ENCODE measurements at regions of chr2 and their contacts with region 1.

Region 1: GRCh38 chr2:173075781-173076580 is at the start of gene MAP3K20:
- DNase-seq: peak; percentile 75 to 82
- ATAC-seq: peak; percentile 75 to 78
- H3K4me3 ChIP-seq: peak within 1 kb of the TSS; percentile 59 to 83 (median 80)
- H3K27ac ChIP-seq: peak within 1 kb of the TSS; percentile 88 to 98 (median 96)
- H3K4me1 ChIP-seq: peaks cover 54 to 67% of the 10 kb centered on the region in 2 donors
- H3K27me3 ChIP-seq: no peaks in the 10 kb centered on the region
- CTCF ChIP-seq: peak; percentile 31 to 72 (median 63)
- POLR2A ChIP-seq: peak; percentile 84 to 95
- total RNA-seq, gene MAP3K20: 225 to 517 (median 280) TPM

Region 2: DNA sequence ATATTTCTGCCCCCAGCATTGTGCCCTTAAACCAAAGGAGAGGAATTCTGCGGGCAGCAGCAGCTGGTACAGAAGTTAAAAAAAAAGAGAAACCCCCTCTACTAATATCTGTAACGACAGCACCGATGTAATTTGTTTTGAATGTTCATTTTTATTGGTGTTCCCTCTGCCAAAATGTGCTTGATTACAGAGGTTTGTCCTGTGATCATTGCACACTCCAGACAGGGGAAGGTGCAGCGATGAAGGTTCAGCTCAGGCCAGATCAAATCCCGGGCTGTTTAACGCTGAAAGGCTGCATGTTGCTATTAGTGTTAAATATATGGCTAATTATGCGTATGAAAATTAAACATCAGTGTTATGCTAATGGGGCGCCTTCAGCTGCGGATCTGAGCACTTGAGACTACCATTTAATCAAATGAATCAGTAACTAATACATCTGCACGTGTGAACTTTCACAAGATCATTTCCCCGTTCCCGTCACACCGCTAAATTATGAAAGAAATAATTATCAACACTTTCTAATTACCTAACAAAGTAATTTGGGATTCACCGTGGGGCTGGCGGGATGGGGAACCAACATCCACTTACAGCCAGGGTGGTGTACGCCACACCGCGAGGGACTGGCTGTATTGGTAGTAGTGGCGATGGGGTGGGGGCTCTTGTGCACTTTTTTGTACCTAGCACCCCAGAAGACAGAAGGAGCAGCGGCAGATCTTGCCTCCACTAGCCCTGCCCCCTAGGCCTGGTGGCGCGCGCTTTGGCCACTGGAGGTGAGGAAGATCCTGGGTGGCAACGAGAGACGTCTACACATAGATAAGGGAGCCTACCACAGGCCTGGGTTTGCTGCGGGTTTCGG is 992.1 kb before region 1 on chr2:
- in situ Hi-C with region 1: no loop called
- intact Hi-C with region 1: no loop called
- DNase-seq: no peak
- ATAC-seq: no peak
- H3K4me3 ChIP-seq: peak overlapping the region in 3 of 4 donors; percentile 46 to 54 (median 52)
- H3K27ac ChIP-seq: no peak overlapping the region
- H3K4me1 ChIP-seq: peaks cover 40 to 43% of the 10 kb centered on the region in 2 donors
- H3K27me3 ChIP-seq: peaks cover 86 to 92% (median 89%) of the 10 kb centered on the region in 3 donors
- CTCF ChIP-seq: no peak
- POLR2A ChIP-seq: no peak

Region 3: DNA sequence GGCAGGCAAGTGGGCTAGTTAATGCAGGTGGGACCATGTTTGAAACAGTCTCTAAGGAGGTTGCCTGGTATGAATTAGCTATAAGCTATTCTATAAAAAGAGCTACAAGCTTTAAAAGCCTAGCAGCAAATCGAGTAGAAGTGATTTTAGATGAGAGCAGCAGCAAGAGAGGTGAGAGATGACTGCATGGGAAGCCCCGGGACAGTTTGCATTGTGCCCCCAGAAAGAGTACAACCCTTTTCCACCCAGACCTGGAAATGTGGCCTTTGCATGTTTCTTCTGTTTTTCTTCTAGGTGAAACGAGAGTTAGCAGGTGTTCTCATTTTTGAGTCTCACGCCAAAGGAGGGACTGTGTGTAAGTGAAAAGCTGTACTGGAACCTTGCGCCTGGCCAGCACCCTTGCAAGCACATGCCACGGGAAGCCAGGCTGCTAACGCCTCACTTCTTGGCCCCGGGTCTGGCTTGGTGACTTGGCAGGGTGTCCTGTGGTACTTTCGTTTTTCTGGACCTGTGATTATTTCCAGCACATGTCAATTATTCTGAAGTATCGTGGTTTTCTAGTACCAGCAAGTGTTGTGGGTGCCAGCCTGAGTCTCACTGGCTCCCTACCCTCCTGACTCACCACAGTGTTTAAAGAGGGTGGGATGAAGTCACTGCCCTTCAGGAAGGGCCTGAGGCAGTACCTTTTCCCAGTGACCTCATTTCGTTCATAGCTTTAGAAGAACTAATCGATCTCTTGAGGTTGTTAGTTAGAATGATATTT is 90.7 kb before region 1 on chr2:
- in situ Hi-C with region 1: no loop called
- intact Hi-C with region 1: loop called (anchors 5 kb)
- DNase-seq: peak; percentile 52 to 62
- ATAC-seq: peak; percentile 91 to 92
- H3K4me3 ChIP-seq: peak overlapping the region; percentile 28 to 34 (median 30)
- H3K27ac ChIP-seq: peak overlapping the region; percentile 68 to 79 (median 73)
- H3K4me1 ChIP-seq: peaks cover 15 to 19% of the 10 kb centered on the region in 2 donors
- H3K27me3 ChIP-seq: no peaks in the 10 kb centered on the region
- CTCF ChIP-seq: no peak
- POLR2A ChIP-seq: peak in 1 of 2 donors; percentile 21

Region 4: GRCh38 chr2:173298536-173299097 is 222.6 kb after region 1 on chr2:
- in situ Hi-C with region 1: no loop called
- intact Hi-C with region 1: no loop called
- DNase-seq: no peak
- ATAC-seq: no peak
- H3K4me3 ChIP-seq: no peak overlapping the region
- H3K27ac ChIP-seq: no peak overlapping the region
- H3K4me1 ChIP-seq: no peaks in the 10 kb centered on the region
- H3K27me3 ChIP-seq: no peaks in the 10 kb centered on the region
- CTCF ChIP-seq: no peak
- POLR2A ChIP-seq: no peak

Measured in gastrocnemius medialis (tissue), 4 donors.